ENCODE measurements at regions of chr11 and their contacts with region 1.

Region 1: DNA sequence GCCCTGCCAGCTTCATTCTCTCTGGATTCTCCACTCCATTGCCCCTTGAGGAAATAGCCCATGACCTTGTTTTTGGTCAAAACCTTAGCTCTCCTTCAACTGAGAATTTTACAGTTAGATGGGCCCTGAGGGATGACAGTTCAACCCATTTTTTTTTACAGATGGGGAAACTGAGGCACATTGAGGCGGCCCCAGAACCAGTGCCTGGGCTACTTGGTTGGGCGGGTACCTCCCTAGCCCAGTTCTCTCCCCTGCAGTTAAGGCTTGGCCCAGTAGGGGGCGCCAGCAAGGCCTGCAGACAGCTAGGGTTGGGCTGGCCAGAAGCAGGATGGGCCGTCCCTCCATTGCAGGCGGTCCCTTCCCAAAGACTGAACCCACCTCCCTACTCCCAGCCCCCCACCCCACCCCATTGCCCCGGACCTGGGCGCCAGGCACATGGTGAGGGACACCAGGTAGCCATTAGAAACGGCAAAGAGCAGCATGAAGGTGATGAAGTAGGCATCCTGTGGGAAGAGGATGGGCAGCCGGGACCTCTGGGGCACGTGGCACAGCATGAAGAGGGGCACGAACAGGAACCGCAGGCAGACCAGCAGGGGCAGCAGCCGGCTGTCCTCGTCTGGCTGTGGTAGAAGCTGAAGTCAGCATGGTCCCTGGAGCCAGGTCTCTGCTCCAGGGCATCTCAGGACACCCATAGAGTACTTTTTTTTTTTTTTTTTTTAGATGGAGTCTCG is 7.6 kb downstream of the SLC29A2 start:
- DNase-seq: peak; percentile 85

Region 2: DNA sequence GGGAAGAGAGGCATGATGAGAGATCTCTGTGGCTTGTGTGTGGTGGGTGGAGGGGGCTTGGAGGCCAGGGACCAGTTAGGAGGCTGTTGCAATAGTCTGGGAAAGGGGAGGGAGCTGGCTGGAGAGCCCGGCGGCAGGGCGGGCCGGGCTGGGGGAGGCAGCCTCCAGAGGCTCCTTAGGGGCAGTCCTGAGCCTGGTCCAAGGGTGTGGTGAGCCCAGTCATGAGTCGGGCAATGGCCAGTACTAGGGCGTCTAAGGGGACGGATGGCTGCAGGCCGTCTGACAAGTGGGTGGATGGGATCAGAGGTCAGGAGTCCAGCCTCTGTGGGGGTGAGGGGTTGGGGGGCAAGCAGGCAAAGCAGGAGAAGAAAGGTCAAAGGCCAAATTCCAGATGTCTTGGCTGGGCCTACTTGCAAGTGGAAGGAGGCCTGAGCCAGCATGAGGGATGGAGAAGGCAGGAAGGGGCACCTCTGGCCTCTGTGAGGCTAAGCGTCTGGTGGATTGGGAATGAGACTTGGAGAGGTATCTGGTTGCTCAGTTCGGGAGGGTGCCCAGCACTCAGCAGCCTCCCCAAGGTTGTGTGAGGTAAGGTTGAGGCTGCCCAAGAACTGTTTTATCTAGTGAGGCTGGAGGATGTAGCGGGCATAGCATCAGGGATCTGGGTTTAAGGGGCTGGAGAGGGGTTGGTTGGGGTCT is 41.1 kb before region 1 on chr11:
- CTCF ChIA-PET with region 1: no interaction called
- POLR2A ChIA-PET with region 1: no interaction called
- DNase-seq: no peak

Region 3: DNA sequence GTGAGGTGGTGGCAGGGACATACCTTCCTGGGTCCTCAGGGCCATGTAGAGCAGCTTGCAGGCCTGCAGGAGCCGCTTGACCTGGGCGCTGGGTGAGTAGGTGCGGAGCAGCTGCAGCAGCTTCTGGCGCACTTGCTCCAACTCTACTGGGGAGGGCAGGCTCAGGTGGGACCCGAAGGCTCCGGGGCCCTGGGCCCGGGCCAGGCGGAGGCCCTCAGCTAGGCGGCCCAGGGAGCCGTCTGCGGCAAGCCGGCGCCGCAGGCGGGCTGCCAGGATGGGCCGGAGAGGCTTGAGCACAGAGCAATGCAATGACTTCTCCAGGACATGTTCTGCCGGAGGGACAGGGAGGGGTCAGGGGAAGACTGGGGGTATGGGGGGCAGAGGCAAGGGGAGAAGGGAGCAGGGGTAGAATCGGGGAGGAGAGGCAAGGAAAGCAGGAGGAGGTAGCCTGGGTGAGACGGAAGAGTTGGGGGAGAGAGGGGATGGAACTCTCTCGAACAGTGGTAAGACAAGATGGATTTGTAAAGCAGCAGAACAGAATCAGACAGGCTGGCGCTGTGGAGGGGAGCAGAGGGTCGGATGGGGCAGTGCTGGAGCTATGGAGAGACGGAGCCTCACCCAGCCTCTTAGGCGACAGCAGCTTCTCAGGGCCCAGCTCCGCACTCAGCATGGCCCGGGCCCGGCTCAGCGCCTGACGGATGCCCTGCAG is 29.9 kb before region 1 on chr11:
- CTCF ChIA-PET with region 1: no interaction called
- POLR2A ChIA-PET with region 1: no interaction called
- DNase-seq: no peak

Region 4: DNA sequence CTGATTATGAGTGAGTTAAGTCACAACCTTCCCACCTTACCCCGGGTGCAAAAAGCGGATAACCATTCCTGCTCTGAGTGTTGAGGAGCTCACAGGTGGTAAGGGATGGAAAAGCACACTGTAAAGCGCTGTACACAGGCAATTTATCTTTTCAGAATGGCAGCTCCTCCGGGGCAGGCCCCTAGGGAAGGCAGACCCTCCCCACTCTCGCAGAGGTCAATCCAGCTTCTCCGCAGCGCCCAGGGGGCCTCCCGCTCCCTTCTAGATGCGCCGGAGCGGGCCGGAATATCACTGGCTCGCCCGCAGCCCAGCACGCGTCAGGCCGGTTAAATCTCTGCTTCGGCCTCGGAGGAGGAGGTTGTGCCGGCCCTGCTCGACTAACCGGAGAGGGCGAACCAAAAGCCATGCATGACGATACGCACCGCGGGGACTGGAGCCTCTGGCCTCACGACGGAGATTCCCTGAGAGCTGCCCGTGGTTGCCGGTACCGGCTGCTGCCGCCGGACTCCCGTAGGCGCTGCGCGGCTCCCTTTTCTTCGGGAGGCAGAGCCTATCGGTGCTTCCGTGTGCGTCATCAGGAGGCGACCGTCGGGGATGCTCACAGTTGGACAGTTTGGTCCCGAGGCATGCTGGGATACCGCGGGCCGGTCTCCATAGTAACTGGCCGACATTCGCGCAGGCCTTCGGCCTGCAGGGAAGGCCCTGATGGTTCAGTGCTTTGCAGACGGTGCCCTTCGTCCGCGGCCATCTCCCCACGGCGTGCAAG is 19.2 kb before region 1 on chr11 and contains the start of gene BRMS1:
- CTCF ChIA-PET with region 1: interaction called, 10 read pairs
- POLR2A ChIA-PET with region 1: interaction called, 5 read pairs
- DNase-seq: peak; percentile 93